GM10248 (cell line): ENCODE measurements at regions of chr19 and their contacts with region 1.

Region 1: GRCh38 chr19:35135389-35135909 is 590 bp upstream of the LGI4 start:
- DNase-seq: peak; percentile 89
- CTCF ChIP-seq: peak; percentile 82

Region 2: GRCh38 chr19:35044317-35045117 is 90.9 kb before region 1 on chr19:
- CTCF ChIA-PET with region 1: interaction called, 18 read pairs
- POLR2A ChIA-PET with region 1: no interaction called
- DNase-seq: peak; percentile 75
- CTCF ChIP-seq: peak; percentile 87

Region 3: DNA sequence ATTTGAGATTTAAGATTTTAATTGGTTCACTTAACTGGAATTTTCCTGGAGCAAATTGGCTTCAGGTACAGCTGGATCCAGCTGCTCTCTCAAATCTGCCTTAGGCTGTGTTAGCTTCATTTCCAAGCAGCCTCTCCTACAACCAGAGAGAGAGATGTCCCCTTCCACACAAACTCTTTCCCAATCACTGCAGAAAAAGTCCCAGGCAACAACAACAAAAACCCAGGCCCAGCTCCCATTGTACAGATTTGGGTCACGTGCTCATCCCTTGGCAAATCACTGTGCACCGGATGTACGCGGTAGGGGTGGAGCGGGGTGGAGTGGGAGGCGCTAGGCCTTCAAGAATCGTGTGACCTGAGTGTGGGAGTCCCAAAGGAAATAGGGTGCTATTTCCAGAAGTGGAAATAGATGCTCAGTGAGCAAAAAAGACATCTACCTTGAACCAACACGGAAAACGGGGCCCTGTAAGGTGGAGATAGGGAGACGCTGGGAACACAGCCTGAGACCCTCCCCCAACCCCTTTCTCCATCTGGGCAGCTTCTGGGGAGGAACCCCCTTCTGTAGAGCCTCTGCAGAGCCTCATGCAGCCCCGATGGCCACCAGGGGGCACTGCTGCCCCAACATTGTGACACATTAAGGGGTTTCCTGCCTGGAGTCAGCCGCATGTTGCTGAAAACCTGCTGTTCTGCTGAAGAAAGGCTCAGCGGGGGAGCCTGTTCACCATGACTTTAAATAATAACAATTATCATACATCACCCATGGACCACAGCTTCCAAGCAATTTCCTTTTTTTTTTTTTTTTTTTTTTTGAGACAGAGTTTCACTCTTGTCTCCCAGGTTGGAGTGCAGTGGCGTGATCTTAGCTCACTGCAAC is 68.5 kb before region 1 on chr19:
- CTCF ChIA-PET with region 1: interaction called, 65 read pairs
- POLR2A ChIA-PET with region 1: no interaction called
- DNase-seq: peak; percentile 93
- CTCF ChIP-seq: peak; percentile 93

Region 4: DNA sequence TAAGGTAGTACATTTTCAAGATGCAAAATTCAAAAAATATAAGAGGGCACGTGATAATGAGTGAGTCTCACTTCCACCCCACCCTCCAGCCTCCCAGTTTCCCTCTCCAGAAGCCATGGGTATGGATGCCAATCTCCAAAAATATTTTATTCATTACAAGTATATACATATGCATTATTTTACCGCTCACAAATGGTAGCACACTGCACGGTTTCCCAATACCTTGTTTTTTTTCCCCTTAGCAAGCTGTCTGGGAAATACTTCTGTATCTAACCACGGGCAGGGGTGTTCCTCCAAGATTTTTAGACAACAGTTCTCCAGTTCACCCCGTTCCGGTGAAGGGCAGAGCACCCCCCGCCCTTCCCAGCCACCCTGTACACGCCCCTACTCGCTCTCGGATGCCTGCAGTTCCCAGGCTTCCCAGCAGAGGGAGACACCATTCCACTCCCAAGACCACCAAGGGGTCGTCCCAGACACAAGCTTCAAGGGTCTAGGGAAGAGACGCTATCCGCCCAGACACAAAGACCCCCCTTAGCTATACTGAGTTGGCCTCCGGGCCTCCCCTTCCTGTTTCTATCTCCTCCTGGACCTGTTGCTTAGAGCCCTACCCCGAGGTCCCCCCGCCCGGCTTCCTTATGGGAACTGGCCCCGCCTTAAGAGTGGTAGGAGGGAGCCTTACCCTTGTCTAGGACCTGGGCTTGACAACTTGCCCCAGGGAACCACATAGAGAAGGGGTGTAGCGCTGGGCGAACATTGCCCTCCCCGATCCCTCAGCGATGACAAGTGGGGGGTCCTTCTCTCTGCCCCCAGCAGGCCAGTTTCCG is 20.9 kb before region 1 on chr19:
- CTCF ChIA-PET with region 1: interaction called, 25 read pairs
- POLR2A ChIA-PET with region 1: no interaction called
- DNase-seq: peak; percentile 87
- CTCF ChIP-seq: peak; percentile 87

Region 5: DNA sequence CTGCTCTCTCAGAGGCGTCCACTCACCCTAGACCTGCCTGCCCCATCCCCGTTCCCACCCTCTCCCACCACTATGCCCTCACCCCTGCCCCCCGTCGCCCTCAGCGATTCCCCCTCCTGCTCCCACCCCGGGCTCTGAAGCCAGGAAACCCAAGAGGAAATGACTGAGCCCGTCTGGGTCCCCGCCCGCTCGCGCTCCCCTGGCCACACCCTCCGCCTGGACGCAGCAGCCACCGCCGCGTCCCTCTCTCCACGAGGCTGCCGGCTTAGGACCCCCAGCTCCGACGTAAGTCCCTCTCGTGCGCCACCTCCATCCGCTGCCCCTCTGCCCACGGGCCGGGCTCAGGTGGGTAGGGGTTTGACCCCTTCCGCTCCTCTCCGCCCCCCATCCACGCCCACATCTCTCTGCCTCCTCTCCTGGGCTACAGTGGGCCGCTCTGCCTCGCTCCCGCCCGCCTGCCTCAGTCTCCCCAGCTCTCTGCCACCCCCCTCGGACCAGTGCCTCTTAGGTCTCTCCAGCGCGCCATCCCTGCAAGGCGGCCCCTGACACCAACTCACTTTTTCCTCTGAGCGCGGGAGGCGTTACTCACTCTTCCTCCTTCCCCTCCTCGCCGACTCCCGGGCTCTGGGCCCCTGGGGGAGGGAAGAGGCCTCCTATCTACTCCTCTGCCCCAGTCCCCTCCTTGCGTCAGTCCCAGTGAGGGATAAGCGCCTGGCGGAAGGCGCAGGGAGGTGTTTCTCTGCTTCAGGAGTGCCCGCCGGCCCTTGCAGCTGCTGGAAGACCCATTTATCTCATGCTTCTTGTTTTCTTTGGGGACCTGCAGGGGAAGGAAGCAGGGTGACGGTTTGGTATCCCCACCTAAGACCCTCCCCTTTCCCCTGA is 19.3 kb after region 1 on chr19 and contains the start of gene FXYD5:
- CTCF ChIA-PET with region 1: interaction called, 39 read pairs
- POLR2A ChIA-PET with region 1: no interaction called
- DNase-seq: peak; percentile 80
- CTCF ChIP-seq: no peak